Left cardiac atrium (tissue), 4 donors: ENCODE measurements at regions of chr10 and their contacts with region 1.

Region 1: DNA sequence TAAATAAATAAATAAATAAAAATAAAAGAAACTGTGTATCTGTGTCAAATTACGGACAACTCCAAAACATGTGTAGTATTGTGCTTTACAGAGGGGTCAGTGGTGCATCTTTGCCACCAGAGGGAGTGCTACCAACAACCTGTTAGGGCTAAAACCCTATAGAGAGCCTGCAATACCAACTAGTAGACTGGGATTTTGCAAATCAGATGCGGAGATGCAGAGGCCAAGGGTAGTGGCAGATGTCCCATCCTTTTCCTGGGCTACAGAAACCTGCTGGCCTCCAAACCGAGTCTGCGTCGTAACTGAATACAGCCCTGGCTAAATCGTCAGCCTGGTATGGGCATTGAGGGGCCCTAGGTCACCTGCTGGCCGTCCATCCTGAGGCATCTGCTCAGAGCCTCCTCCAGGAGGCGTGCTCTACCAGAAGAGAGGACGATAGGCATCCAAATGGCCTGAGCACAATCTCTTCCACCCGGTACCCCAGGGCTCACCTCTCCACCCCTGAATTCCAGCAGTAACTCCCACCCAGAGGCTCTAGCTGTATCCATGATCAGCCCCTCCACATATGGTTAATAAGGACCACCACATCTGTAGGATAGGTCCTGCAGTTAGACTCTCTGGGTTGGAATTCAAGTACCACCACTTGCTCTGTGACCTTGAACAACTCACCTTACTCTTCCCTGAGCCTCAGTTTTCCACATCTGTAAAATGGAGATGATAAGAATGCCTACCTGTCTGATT is 6.2 kb upstream of the RRP12 start:
- DNase-seq: no peak
- ATAC-seq: peak; percentile 91 to 97

Region 2: GRCh38 chr10:97318772-97319651 is 88.4 kb before region 1 on chr10 and contains the start of gene FRAT1:
- intact Hi-C with region 1: no loop called
- DNase-seq: peak; percentile 93
- ATAC-seq: peak; percentile 90 to 92
- total RNA-seq, gene FRAT1: 2.1 to 6.2 TPM

Region 3: DNA sequence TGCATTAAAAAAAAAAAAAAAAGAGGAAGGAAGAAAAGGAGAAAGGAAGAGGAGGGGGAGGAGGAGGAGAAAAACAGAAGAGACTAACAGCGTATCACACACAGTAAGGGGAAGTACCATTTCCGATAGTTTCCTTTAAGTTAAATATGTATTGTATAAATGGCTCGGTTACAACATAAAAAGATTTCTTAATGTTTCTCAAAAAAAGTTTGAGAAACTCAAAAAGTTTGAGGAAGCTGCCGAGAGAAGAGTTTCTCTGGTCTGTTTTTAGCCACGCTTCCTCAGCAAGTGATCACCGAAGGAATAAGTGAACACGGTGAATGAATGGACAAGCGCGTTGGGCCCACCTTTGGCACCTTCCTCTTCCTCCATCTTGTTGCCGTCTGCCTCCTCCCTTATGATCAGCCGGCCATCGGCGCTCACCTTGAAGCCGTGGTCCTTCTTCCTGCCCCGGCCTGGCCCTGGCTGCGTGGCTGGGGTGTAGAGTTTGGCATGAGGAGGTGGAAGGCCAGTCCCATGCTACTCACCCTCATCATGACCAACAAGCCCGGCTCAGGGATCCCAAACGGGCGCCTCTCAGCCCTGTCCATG is 41.5 kb before region 1 on chr10:
- intact Hi-C with region 1: no loop called
- DNase-seq: no peak
- ATAC-seq: peak; percentile 19 to 57

Region 4: GRCh38 chr10:97553575-97554031 is 146.2 kb after region 1 on chr10:
- intact Hi-C with region 1: loop called in 1 of 2 experiments (anchors 5 kb)
- DNase-seq: peak; percentile 72
- ATAC-seq: peak; percentile 89 to 91